Activated CD4-positive, alpha-beta T cell treated with anti-CD3 and anti-CD28 coated beads for 36 hours (primary cell): ENCODE measurements at regions of chr1 and their contacts with region 1.

Region 1: GRCh38 chr1:36369061-36369861 is 16.5 kb downstream of the STK40 start:
- DNase-seq: peak; percentile 92
- ATAC-seq: peak; percentile 35
- H3K4me3 Mint-ChIP-seq: no peak overlapping the region
- H3K27ac Mint-ChIP-seq: peak overlapping the region; percentile 76
- H3K4me1 Mint-ChIP-seq: peaks cover 69% of the 10 kb centered on the region
- H3K27me3 Mint-ChIP-seq: no peaks in the 10 kb centered on the region

Region 2: DNA sequence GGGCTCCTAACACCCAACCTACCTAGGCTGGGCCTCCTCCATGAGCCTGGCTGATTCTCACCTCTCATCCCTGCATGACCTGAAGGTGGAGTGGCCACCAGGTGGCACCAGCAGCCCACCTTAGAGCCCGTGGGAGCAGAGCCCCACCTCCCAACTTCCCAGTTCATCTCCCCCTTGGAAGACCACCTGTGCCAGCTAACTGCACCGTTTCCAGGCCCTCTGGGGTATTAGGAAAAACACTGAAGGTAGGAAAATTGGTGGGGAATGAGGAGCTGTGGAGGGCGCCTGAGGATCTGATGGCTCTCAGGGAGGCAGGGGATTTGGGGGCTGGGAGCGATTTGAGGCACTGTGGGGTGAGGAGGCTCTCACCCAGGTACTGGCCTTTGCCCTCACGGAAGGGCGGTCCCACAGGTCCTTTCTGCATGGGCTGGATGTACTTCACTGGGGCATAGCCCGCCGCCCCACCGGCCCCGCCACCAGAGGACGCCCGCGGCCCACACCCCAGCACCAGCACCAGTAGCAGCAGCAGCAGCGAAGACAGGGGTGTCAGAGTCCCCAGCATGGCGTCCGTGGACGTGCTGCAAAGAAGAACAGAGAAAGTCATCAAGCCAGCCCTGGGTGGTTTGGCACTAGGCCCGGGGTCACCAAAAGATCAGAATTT is 269.4 kb before region 1 on chr1:
- CTCF ChIA-PET with region 1: interaction called, 4 read pairs
- POLR2A ChIA-PET with region 1: no interaction called
- intact Hi-C with region 1: loop called in 1 of 2 experiments (anchors 1 kb)
- DNase-seq: peak; percentile 87
- ATAC-seq: peak; percentile 95
- H3K4me3 Mint-ChIP-seq: no peak overlapping the region
- H3K27ac Mint-ChIP-seq: peak overlapping the region; percentile 10
- H3K4me1 Mint-ChIP-seq: no peaks in the 10 kb centered on the region
- H3K27me3 Mint-ChIP-seq: no peaks in the 10 kb centered on the region

Region 3: GRCh38 chr1:36306902-36307456 is 62.3 kb before region 1 on chr1:
- CTCF ChIA-PET with region 1: interaction called, 3 read pairs
- POLR2A ChIA-PET with region 1: no interaction called
- intact Hi-C with region 1: loop called in 1 of 2 experiments (anchors 5 kb)
- DNase-seq: peak; percentile 96
- ATAC-seq: peak; percentile 91
- H3K4me3 Mint-ChIP-seq: peak overlapping the region; percentile 98
- H3K27ac Mint-ChIP-seq: peak overlapping the region; percentile 96
- H3K4me1 Mint-ChIP-seq: peaks cover 45% of the 10 kb centered on the region
- H3K27me3 Mint-ChIP-seq: no peaks in the 10 kb centered on the region

Region 4: DNA sequence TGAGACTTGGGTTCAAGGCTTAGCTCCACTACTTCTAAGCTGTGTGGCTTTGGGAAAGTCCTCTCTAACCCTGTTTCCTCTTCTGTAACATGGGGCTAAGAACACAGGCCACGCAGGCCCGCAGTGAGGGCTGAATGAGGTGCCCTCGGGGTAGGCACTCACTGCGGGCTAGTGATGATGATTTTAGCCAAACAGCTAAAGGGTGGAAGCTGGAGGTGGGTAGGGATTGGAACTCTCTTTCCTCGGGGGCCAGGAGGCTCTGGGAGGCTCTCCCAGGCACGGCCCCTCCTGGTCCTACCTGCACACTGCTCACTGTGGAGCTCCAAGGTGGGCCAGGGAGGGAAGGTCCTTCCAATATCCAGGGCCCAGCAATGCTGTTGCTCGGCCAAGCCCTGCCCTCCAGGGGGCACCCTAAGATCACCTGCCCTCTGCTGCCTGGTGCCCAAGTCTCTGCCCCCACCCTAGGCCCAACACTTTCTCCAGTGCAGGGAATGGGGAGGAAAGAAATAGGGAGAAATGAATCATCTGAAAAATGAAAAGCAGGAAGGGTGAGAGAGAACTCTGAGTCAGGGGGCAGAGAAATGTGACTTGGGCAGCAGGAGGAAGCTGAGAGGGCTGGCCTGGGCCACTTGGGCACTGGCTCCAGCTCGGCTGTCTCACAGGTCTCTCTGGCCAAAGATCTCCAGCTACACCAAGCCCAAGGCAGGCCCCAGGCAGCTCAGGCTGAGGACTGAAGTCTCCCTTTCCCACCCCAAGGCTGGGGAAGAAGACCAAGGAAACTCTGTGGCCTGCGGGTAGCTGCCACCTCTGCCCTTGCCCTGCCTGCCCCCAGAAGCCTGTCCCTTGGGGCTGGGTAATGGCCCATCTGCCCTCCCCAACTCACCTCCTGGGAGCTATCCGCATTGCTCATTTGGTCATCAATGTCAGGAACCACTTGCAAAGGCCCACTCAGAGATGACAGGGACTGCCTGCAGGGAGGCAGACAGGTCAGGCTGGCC is 26.5 kb before region 1 on chr1:
- CTCF ChIA-PET with region 1: interaction called, 31 read pairs
- POLR2A ChIA-PET with region 1: no interaction called
- intact Hi-C with region 1: loop called (anchors 1 to 2 kb)
- DNase-seq: peak; percentile 77
- ATAC-seq: peak; percentile 88
- H3K4me3 Mint-ChIP-seq: no peak overlapping the region
- H3K27ac Mint-ChIP-seq: no peak overlapping the region
- H3K4me1 Mint-ChIP-seq: peaks cover 20% of the 10 kb centered on the region
- H3K27me3 Mint-ChIP-seq: no peaks in the 10 kb centered on the region

Region 5: GRCh38 chr1:36350659-36351226 is 18.5 kb before region 1 on chr1:
- CTCF ChIA-PET with region 1: interaction called, 29 read pairs
- POLR2A ChIA-PET with region 1: no interaction called
- intact Hi-C with region 1: loop called in 1 of 2 experiments (anchors 2 kb)
- DNase-seq: peak; percentile 77
- ATAC-seq: peak; percentile 87
- H3K4me3 Mint-ChIP-seq: peak overlapping the region; percentile 15
- H3K27ac Mint-ChIP-seq: peak overlapping the region; percentile 80
- H3K4me1 Mint-ChIP-seq: peaks cover 38% of the 10 kb centered on the region
- H3K27me3 Mint-ChIP-seq: no peaks in the 10 kb centered on the region

Region 6: DNA sequence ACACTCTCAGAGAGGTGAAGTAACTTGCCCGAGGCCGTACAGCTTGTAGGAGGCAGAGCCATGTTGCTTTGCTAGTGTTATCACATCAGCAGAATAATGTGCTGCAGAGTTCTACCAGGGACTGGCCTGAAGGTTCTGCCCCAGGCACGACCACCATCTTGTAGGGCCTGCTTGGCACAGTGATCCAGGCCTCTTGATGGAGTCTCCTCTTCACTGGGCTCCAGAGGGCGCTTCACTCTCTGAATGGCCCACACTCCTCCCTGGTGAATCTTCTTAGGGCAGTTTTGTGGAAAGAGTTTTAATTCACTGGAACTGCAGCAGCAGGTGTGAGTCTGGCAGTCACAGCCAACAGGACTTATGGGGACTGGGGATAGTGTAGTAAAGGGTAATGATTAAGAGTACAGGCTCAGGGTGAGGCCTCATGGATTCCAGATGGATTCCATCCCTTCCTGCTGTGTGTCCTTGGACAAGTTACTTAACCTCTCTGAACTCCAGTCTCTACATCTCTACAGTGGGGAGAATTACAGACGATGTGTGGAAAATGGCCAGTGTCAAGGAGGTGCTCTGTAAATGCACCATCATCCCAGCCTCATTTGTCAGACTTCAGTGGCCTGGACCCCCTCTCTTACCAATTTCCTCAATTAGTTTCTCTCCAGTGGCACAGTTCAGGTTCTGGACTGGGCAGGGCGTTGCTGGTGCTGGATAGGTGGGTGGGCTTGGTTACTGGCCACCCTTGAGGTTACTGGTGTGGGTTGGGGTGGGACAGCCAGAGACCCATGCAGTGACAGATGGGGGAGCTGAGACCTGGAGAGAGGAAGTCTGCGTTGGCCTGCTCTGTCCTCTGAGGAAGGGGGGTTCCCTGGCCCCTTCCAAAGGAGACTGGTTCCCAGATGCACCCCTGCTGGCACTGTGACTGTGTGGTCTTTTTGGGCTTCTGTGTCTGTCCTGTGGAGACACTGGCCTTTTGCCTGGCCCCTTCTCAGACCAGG is 159.4 kb after region 1 on chr1:
- CTCF ChIA-PET with region 1: no interaction called
- POLR2A ChIA-PET with region 1: no interaction called
- intact Hi-C with region 1: no loop called
- DNase-seq: peak; percentile 18
- ATAC-seq: no peak
- H3K4me3 Mint-ChIP-seq: no peak overlapping the region
- H3K27ac Mint-ChIP-seq: no peak overlapping the region
- H3K4me1 Mint-ChIP-seq: peaks cover 8% of the 10 kb centered on the region
- H3K27me3 Mint-ChIP-seq: no peaks in the 10 kb centered on the region